ENCODE measurements at regions of chr6 and their contacts with region 1.

Region 1: GRCh38 chr6:26196846-26197648 is 109.8 kb downstream of the HFE start:
- DNase-seq: peak; percentile 84
- H3K4me3 ChIP-seq: peak overlapping the region; percentile 46 to 70 (median 62)
- H3K27ac ChIP-seq: peak overlapping the region; percentile 97 to 99 (median 98)
- H3K4me1 ChIP-seq: peaks cover 5 to 29% (median 20%) of the 10 kb centered on the region in 4 donors
- H3K27me3 ChIP-seq: no peaks in the 10 kb centered on the region
- CTCF ChIP-seq: no peak
- EP300 ChIP-seq: no peak
- POLR2A ChIP-seq: peak; percentile 91

Region 2: GRCh38 chr6:25384967-25385366 is 812.1 kb before region 1 on chr6:
- in situ Hi-C with region 1: no loop called
- intact Hi-C with region 1: no loop called
- DNase-seq: no peak
- H3K4me3 ChIP-seq: no peak overlapping the region
- H3K27ac ChIP-seq: no peak overlapping the region
- H3K4me1 ChIP-seq: no peaks in the 10 kb centered on the region
- H3K27me3 ChIP-seq: no peaks in the 10 kb centered on the region
- CTCF ChIP-seq: no peak
- EP300 ChIP-seq: no peak
- POLR2A ChIP-seq: no peak

Region 3: DNA sequence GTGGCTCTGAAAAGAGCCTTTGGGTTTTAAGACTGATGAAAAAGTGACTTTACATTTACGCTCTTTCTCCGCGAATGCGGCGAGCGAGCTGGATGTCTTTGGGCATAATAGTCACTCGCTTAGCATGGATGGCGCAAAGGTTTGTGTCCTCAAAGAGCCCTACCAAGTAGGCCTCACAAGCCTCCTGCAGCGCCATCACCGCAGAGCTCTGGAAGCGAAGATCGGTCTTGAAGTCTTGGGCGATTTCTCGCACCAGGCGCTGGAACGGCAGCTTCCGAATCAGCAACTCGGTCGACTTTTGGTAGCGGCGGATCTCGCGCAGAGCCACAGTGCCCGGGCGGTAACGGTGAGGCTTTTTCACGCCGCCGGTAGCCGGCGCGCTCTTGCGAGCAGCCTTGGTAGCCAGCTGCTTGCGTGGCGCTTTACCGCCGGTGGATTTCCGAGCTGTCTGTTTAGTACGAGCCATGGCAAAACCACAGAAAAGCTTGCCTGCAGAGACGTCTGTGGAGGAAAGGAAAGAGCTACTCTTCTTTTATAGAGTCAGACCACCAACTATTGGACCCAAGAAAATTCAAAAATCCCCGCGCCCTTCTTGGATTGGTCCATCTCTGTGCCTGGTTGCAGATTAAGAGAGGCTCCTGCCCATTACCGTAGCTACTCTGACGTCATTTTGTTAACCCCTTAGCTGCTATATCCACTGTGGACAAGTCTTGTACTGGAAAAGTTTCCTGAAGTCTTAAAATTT is 165.3 kb before region 1 on chr6:
- in situ Hi-C with region 1: loop called in 1 of 4 experiments (anchors 10 kb)
- intact Hi-C with region 1: loop called (anchors 10 kb)
- DNase-seq: peak; percentile 85
- H3K4me3 ChIP-seq: peak overlapping the region; percentile 6 to 56 (median 50)
- H3K27ac ChIP-seq: peak overlapping the region; percentile 88 to 96 (median 94)
- H3K4me1 ChIP-seq: peaks cover 0 to 28% (median 27%) of the 10 kb centered on the region in 4 donors
- H3K27me3 ChIP-seq: no peaks in the 10 kb centered on the region
- CTCF ChIP-seq: peak in 1 of 5 experiments; percentile 22
- EP300 ChIP-seq: no peak
- POLR2A ChIP-seq: peak; percentile 71